GM12878 (cell line): ENCODE measurements at regions of chr10 and their contacts with region 1.

Region 1: DNA sequence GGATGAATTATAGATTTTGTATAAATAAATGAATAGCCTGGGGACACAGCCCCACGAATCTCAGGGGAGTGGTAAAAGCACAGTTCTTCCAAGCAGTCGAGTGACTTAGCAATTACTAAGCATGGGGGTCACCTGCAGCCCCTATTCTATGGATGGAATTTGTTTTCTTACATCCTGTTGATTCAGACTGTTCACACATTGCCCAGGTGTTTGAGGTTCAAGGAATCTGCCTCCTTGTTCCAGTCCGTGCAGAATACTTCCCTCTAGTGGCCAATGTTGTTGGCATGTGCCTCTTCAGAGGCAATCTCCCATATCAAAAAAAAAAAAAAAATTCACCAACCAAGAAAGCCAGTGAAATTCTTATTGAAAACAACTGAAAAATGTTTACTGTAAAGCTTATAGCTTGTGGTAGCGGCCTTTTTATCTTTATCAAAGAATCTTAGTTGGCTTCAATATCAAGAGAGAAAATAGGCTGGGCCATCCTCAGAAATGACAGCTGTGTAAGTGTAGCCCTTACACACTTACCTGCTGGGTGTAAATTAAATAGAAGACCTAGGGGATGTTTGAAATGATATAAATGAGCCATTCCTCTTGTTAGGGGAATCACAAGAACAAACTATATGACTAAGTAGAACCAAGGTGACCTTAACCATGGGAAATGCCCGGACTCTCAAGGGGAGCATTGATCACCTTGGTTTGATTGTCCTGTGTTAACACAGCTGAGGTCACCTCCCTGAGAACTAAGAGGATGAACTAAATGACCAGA is 7.8 kb downstream of the LIPM start:
- DNase-seq: no peak
- ATAC-seq: peak; percentile 91
- H3K4me3 ChIP-seq: no peak overlapping the region
- H3K27ac ChIP-seq: no peak overlapping the region
- H3K4me1 ChIP-seq: no peaks in the 10 kb centered on the region
- H3K27me3 ChIP-seq: peaks cover 0 to 2% of the 10 kb centered on the region in 2 experiments; a peak in 2 of 4 replicates
- CTCF ChIP-seq: peak; percentile 70 to 77 (median 75)
- EP300 ChIP-seq: no peak
- POLR2A ChIP-seq: no peak
- RAD21 ChIP-seq: peak; percentile 79

Region 2: DNA sequence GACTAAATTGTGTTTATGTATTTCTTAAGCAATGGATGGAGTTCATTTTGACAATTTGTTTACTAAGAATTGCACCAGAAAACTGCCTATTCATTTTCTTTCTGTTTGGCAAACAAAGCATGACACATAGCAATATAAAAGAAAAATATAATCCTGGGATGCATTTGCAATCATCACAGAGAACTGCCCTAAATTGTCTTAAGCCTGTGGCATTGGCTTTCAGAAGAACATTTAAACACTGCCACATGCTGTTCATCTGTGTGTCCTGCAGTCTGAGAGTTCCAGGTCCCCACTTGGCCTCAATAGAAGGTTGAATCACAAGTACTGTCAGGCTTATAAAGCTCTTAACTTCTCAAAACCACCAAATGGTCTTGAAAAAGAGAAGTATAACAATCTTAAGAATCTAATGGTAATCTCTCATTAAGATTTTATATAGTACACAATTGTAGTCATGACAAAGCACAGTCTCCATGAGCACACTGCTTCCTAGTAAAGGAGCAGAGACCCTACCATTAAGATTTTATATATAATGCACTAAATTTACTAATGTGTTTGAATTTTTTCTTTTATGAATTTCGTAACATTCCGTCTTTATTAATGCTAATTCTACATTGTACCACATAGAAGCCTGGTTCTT is 257.1 kb before region 1 on chr10:
- CTCF ChIA-PET with region 1: no interaction called
- POLR2A ChIA-PET with region 1: no interaction called
- RAD21 ChIA-PET with region 1: no interaction called
- SMC1A ChIA-PET with region 1: no interaction called
- in situ Hi-C with region 1: no loop called
- intact Hi-C with region 1: no loop called
- DNase-seq: peak; percentile 45
- ATAC-seq: peak; percentile 99
- H3K4me3 ChIP-seq: no peak overlapping the region
- H3K27ac ChIP-seq: no peak overlapping the region; the same call in 1 of the 2 replicates
- H3K4me1 ChIP-seq: 0 out of 2 replicates have a peak, but pooled peaks cover 5% of the 10 kb centered on the region
- H3K27me3 ChIP-seq: no peaks in the 10 kb centered on the region
- CTCF ChIP-seq: peak; percentile 84 to 94 (median 90)
- EP300 ChIP-seq: no peak
- POLR2A ChIP-seq: no peak
- RAD21 ChIP-seq: peak; percentile 97

Region 3: DNA sequence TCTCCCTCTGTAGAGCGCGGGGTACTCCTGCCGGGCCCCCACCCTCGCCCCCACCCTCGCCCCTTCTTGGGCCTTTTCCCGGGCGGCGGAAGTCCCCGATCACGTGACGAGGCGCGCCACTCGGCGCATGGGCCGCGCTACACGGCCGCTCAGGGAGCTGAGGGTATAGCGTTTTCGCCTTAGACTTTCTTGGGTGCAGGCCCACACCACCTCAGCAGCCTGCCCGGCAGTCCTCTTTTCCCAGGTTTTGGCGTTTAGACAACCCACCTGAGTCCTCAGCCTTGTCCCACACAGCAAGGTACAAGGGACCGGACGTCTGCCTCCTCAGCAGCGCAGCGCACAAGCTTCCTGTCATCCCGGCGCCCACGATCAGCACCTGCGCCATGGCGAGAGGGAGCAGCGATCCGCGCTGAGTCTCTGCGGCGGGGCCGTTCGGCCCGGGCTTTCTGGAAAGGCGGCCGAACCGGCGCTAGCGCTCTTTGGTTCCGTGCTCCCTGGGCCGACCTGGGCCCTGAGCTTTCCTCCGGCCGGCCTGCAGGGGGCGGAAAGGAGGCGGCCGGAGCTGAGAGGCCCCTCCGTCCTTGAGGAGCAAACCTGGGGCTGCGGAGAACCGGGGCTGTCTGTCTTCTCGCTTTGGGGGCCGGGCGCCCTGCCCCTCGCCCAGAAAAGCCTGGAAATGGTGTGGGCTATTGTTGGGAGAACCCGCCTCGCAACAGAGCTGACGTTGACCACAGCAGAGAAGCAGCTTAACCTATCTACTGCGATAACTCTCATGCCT is 227.4 kb before region 1 on chr10 and contains the start of gene RNLS:
- CTCF ChIA-PET with region 1: interaction called, 10 read pairs
- POLR2A ChIA-PET with region 1: no interaction called
- RAD21 ChIA-PET with region 1: no interaction called
- SMC1A ChIA-PET with region 1: interaction called, 3 read pairs
- in situ Hi-C with region 1: no loop called
- intact Hi-C with region 1: loop called (anchors 5 kb)
- DNase-seq: peak; percentile 37
- ATAC-seq: peak; percentile 97
- H3K4me3 ChIP-seq: peak within 1 kb of the TSS; percentile 69
- H3K27ac ChIP-seq: peak within 1 kb of the TSS; percentile 87
- H3K4me1 ChIP-seq: peaks cover 4% of the 10 kb centered on the region; the same call in 1 of the 2 replicates
- H3K27me3 ChIP-seq: no peaks in the 10 kb centered on the region
- CTCF ChIP-seq: peak; percentile 76 to 92 (median 81)
- EP300 ChIP-seq: no peak
- POLR2A ChIP-seq: peak; percentile 91
- RAD21 ChIP-seq: peak; percentile 60
- polyA plus RNA-seq, gene RNLS: 3.7 to 4.1 TPM

Region 4: DNA sequence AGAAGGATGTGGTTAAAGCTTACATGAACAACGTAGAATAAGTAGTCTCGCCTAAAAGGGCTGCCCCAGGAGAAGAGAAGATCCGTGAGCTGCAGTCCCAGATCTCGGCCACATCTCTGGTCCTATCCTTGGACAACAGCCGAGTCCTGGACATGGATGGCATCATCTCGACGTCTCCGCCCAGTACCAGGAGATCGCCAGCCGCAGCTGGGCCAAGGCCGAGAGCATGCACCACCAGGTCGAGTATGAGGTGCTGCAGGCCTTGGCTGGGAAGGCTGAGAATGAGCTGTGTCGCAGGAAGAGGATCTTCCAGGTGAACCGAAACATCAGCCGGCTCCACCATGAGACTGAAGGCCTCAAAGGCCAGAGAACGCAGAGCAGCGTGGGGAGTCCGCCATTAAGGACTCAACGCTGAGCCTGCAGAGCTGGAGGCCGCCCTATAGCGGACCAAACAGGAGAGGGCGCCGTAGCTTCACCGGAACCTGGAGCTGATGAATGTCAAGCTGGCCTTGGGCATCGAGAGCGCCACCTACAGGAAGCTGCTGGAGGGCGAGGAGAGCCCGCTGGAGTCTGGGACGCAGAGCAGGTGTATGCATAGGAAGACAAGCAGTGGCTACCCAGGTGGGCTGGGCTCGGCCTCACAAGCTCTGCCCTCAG is 82.1 kb before region 1 on chr10:
- CTCF ChIA-PET with region 1: interaction called, 54 read pairs
- POLR2A ChIA-PET with region 1: no interaction called
- RAD21 ChIA-PET with region 1: interaction called, 20 read pairs
- SMC1A ChIA-PET with region 1: interaction called, 9 read pairs
- in situ Hi-C with region 1: no loop called
- intact Hi-C with region 1: loop called (anchors 5 kb)
- DNase-seq: no peak
- ATAC-seq: peak; percentile 53
- H3K4me3 ChIP-seq: no peak overlapping the region
- H3K27ac ChIP-seq: no peak overlapping the region
- H3K4me1 ChIP-seq: peaks cover 3% of the 10 kb centered on the region
- H3K27me3 ChIP-seq: no peaks in the 10 kb centered on the region
- CTCF ChIP-seq: peak; percentile 39 to 65 (median 51); a peak in 5 of 6 replicates
- EP300 ChIP-seq: no peak
- POLR2A ChIP-seq: no peak
- RAD21 ChIP-seq: peak; percentile 79

Region 5: GRCh38 chr10:88791924-88792323 is 18.5 kb before region 1 on chr10:
- CTCF ChIA-PET with region 1: interaction called, 4 read pairs
- POLR2A ChIA-PET with region 1: no interaction called
- RAD21 ChIA-PET with region 1: interaction called, 3 read pairs
- SMC1A ChIA-PET with region 1: interaction called, 12 read pairs
- in situ Hi-C with region 1: no loop called
- intact Hi-C with region 1: no loop called
- DNase-seq: peak; percentile 17
- ATAC-seq: peak; percentile 91
- H3K4me3 ChIP-seq: no peak overlapping the region
- H3K27ac ChIP-seq: no peak overlapping the region
- H3K4me1 ChIP-seq: peaks cover 7% of the 10 kb centered on the region; the same call in 1 of the 2 replicates
- H3K27me3 ChIP-seq: no peaks in the 10 kb centered on the region
- CTCF ChIP-seq: peak; percentile 44 to 57 (median 52)
- EP300 ChIP-seq: no peak
- POLR2A ChIP-seq: no peak
- RAD21 ChIP-seq: peak; percentile 56

Region 6: GRCh38 chr10:88828310-88828709 is 17.9 kb after region 1 on chr10:
- CTCF ChIA-PET with region 1: interaction called, 17 read pairs
- POLR2A ChIA-PET with region 1: interaction called, 3 read pairs
- RAD21 ChIA-PET with region 1: interaction called, 5 read pairs
- SMC1A ChIA-PET with region 1: interaction called, 4 read pairs
- in situ Hi-C with region 1: no loop called
- intact Hi-C with region 1: no loop called
- DNase-seq: no peak
- ATAC-seq: no peak
- H3K4me3 ChIP-seq: no peak overlapping the region
- H3K27ac ChIP-seq: no peak overlapping the region
- H3K4me1 ChIP-seq: 0 out of 2 replicates have a peak, but pooled peaks cover 3% of the 10 kb centered on the region
- H3K27me3 ChIP-seq: no peaks in the 10 kb centered on the region
- CTCF ChIP-seq: no peak
- EP300 ChIP-seq: no peak
- POLR2A ChIP-seq: no peak
- RAD21 ChIP-seq: no peak

Region 7: DNA sequence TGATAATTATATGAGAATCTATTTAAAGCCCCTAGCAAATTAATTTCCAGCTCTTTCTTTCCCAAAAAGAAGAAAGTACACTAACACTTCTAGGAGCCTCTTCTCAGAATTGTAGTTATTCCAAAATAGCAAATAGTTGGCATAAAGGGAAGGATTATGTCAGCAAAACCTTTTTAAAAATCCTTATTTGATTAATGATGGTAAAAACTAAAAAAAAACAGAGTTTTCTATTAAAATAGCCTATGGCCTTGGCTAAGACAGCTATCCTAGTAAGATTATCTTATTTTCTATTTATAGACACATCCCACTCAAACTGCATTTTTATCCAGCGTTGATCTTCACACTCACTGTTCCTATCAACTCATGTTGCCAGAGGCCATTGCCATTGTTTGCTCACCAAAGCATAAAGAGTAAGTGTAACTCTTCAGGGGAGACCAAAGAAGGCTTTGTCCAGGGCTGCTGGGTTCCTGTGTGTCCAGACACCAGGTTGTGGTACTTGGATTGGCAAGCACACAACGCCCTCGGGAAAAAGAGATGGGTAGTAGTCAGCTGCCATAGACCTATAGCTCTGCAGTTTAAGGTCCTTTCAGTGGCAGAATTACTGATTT is 110.7 kb after region 1 on chr10:
- CTCF ChIA-PET with region 1: no interaction called
- POLR2A ChIA-PET with region 1: no interaction called
- RAD21 ChIA-PET with region 1: no interaction called
- SMC1A ChIA-PET with region 1: no interaction called
- in situ Hi-C with region 1: no loop called
- intact Hi-C with region 1: no loop called
- DNase-seq: no peak
- ATAC-seq: no peak
- H3K4me3 ChIP-seq: no peak overlapping the region
- H3K27ac ChIP-seq: no peak overlapping the region
- H3K4me1 ChIP-seq: no peaks in the 10 kb centered on the region
- H3K27me3 ChIP-seq: no peaks in the 10 kb centered on the region
- CTCF ChIP-seq: no peak
- EP300 ChIP-seq: no peak
- POLR2A ChIP-seq: no peak
- RAD21 ChIP-seq: no peak